ENCODE measurements at regions of chr17 and their contacts with region 1.

Region 1: GRCh38 chr17:35764123-35764991 is 3.7 kb downstream of the C17orf50 start:
- DNase-seq: peak; percentile 98
- H3K4me3 ChIP-seq: peak overlapping the region; percentile 56
- H3K27ac ChIP-seq: peak overlapping the region in 1 of 2 experiments; percentile 77; a peak in 2 of 4 replicates
- H3K4me1 ChIP-seq: peaks cover 0 to 15% of the 10 kb centered on the region in 2 experiments; a peak in 1 of 4 replicates
- H3K27me3 ChIP-seq: no peaks in the 10 kb centered on the region
- CTCF ChIP-seq: peak; percentile 62
- EP300 ChIP-seq: no peak
- RAD21 ChIP-seq: peak; percentile 86

Region 2: DNA sequence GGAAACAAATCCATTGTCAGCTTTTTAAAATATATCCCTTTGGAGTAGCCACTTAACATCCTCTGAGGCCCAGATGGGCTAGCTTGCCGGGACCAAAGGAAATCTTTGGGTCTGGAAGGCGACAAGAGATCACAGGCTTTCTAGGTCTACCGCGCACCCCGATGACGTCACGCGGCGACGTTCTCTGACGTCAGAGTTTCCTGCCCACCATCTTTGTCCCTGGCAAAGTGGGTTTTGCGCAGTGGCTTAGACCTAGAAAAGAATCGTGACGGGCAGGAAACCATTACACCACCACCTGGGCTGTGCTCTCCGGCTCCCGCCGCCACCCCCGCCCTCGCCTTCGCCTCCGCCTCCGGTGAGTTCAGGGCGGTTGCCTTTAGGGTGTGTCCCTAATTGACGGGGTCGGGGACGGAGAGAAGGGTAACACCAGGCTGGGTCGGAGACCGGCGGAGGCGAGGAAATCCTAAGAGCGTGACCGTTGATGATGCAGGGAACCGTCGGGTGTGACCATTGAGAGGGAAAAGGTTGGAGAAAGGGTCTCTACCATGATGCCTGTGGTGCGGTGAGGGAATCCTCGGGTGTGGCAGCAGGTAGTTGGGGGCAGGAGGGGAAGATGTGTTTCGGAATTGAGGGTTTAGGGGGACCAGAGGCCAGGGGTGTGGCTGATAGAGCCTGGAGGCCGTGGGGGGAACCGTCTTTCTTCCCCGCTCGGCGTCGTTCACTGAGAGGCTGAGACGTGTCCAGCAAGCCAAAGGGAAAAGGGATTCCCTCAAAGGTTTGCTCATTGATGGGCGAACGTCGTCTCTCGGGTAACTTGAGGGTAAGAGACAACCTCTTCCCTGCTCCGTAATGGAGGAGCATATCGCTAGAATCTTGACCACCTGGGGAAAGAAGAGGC is 177.0 kb before region 1 on chr17 and contains the start of gene AP2B1:
- CTCF ChIA-PET with region 1: interaction called, 14 read pairs
- POLR2A ChIA-PET with region 1: no interaction called
- DNase-seq: peak; percentile 88
- H3K4me3 ChIP-seq: peak within 1 kb of the TSS; percentile 73 to 94
- H3K27ac ChIP-seq: peak within 1 kb of the TSS; percentile 85 to 93
- H3K4me1 ChIP-seq: peaks cover 5 to 18% of the 10 kb centered on the region in 2 experiments; a peak in 2 of 4 replicates
- H3K27me3 ChIP-seq: no peaks in the 10 kb centered on the region
- CTCF ChIP-seq: no peak
- EP300 ChIP-seq: no peak; a peak in 1 of 4 replicates
- RAD21 ChIP-seq: no peak
- polyA plus RNA-seq, gene AP2B1: 97.8 and 135 TPM in 2 replicates

Region 3: DNA sequence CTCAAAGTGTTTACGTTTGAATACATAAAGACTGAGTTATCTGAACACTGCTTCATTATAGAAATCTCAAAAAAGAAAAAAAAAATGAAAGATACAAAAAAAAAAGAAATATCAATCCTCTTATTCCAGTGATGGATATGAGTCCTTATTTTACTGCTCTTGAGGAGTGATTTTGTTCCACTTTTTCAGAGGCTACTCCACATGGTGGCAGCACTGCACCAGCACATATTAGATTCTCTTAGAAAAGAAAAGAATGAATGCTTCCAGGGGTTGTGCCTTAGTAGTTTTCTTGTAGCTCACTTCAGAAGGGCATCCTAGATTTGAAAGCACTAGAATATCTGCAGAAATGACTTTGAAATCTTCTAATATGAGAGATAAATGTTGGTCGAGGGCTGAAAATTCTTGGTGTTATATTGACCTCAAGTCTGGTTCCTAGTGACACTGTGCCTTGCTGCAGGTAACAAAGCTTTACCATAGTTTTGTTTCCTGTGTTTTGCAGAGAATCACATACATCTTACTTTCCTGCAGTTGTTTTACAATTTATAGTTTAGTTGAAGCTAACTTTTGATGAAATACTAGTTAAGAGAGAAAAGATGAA is 151.3 kb before region 1 on chr17:
- CTCF ChIA-PET with region 1: interaction called, 32 read pairs
- POLR2A ChIA-PET with region 1: no interaction called
- DNase-seq: peak; percentile 52
- H3K4me3 ChIP-seq: no peak overlapping the region; a peak in 1 of 4 replicates
- H3K27ac ChIP-seq: no peak overlapping the region
- H3K4me1 ChIP-seq: no peaks in the 10 kb centered on the region
- H3K27me3 ChIP-seq: no peaks in the 10 kb centered on the region
- CTCF ChIP-seq: peak; percentile 85
- EP300 ChIP-seq: no peak
- RAD21 ChIP-seq: peak; percentile 75

Region 4: DNA sequence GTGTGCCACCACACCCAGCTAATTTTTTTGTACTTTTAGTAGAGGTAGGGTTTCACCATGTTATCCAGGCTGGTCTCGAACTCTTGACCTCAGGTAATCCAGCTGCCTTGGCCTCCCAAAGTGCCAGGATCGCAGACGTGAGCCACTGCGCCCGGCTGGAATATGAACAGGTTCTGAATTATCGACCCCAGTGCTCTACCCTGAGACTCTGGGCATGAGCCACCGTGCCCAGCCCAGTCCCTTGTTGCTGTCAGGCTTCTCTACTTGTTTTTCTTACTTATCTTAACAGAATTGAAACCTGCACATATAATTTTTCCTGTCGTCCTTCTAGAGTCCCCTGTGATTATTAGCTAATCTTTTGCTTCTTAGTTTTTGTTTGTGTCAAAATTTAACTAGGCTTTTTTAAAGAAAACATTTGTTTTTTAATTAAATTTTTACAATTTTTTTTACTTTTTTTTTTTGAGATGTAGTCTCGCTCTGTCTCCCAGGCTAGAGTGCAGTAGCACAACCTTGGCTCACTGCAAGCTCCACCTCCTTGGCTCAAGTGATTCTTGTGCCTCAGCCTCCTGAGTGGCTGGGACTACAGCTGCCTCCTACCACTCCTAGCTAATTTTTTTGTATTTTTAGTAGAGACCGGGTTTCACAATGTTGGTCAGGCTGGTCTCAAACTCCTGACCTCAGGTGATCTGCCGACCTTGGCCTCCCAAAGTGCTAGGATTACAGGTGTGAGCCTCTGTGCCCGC is 110.6 kb before region 1 on chr17:
- CTCF ChIA-PET with region 1: no interaction called
- POLR2A ChIA-PET with region 1: no interaction called
- DNase-seq: no peak
- H3K4me3 ChIP-seq: no peak overlapping the region
- H3K27ac ChIP-seq: no peak overlapping the region
- H3K4me1 ChIP-seq: no peaks in the 10 kb centered on the region
- H3K27me3 ChIP-seq: no peaks in the 10 kb centered on the region
- CTCF ChIP-seq: no peak
- EP300 ChIP-seq: no peak
- RAD21 ChIP-seq: no peak

Region 5: DNA sequence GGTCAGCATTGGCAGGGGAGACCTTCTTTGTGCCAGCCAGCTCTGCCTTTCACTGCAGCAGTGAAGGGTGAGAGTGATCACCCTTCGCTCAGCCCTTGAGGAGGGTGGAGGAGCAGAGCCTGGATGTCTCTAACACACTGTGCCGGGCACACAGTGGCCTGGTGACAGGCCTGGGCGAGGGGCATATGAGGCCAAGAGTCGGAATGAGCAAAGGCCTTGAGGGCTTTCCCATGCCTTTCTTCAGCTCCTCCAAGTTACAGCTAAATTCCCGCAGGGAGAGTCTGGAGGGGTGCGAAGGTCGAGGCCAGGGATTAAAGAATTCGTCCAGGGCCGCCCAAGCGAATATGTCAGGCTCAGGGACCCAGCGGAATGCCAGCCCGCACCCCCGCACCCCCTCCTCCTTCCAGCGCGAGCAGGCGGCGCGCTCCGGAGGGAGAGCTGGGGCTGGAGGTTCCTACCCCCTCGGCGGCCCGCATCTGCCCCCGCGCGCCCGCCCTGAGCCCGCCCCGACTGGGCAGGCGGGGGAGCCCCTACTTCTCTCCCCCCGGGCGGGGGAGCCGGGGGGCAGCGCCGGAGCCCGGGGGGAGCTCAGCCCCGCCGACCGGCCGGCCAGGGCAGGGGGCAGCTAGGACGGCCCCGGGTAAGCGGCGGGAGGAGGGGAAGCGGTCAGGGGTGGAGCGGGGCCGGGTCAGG is 33.0 kb before region 1 on chr17 and contains the start of gene RASL10B:
- CTCF ChIA-PET with region 1: interaction called, 10 read pairs
- POLR2A ChIA-PET with region 1: no interaction called
- DNase-seq: peak; percentile 93
- H3K4me3 ChIP-seq: peak within 1 kb of the TSS; percentile 63 to 65
- H3K27ac ChIP-seq: peak within 1 kb of the TSS in 1 of 2 experiments; percentile 9; a peak in 1 of 4 replicates
- H3K4me1 ChIP-seq: peaks cover 13 to 20% of the 10 kb centered on the region in 2 experiments; a peak in 3 of 4 replicates
- H3K27me3 ChIP-seq: no peaks in the 10 kb centered on the region
- CTCF ChIP-seq: no peak
- EP300 ChIP-seq: no peak
- RAD21 ChIP-seq: no peak
- polyA plus RNA-seq, gene RASL10B: 4.2 and 4.3 TPM in 2 replicates

Region 6: DNA sequence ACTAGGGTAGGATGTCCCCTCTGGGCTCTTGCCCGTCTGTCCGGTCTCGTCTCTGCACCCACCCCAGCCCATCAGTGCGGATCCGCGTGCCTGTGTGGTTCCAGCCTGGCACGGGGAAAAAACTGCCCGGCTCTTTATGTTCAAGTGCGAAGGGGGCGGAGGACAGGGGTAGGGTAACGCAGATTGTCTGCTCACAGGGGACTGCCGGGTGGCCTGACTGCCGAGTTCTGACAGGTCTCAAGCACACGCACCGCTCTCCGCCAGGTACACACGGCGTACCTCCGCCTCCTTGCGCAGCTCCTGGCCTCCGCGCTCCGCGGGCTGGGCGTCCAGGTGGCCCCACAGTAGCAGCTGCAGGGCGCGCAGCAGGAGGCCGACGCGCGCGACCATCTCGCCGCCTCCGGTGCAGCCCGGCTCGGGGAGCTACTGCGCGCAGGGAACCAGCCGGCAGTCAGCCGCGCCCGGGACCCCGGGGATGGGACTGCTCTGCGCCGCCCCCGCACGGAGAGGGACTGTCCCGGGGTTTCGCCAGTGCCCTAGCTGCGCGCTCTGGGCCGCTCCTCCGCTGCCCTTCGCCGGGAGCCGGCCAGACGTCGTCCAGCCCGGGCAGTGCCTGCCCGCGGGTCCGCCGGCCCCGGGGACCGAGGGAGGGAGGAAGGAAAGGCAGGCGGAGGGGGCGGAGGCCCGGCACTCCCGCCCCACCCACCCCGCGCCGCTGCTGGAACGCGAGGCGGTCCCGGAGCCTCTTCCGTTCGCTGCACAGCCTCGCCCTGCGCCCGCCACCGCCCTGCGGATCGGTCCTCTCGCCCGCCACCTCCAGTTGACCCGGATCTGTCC is 30.8 kb after region 1 on chr17 and contains the start of gene MMP28:
- CTCF ChIA-PET with region 1: interaction called, 100 read pairs
- POLR2A ChIA-PET with region 1: interaction called, 3 read pairs
- DNase-seq: peak; percentile 86
- H3K4me3 ChIP-seq: peak within 1 kb of the TSS; percentile 55 to 56; a peak in 3 of 4 replicates
- H3K27ac ChIP-seq: peak within 1 kb of the TSS in 1 of 2 experiments; percentile 53; a peak in 1 of 4 replicates
- H3K4me1 ChIP-seq: peaks cover 0 to 44% of the 10 kb centered on the region in 2 experiments; a peak in 2 of 4 replicates
- H3K27me3 ChIP-seq: peaks cover 47% of the 10 kb centered on the region
- CTCF ChIP-seq: no peak
- EP300 ChIP-seq: no peak
- RAD21 ChIP-seq: no peak
- polyA plus RNA-seq, gene MMP28: 0.23 and 0.33 TPM in 2 replicates

Measured in SK-N-SH (cell line).